Activated B cell treated with CpG ODN at 0.5 μM for 24 hours (primary cell): ENCODE measurements at regions of chr15 and their contacts with region 1.

Region 1: DNA sequence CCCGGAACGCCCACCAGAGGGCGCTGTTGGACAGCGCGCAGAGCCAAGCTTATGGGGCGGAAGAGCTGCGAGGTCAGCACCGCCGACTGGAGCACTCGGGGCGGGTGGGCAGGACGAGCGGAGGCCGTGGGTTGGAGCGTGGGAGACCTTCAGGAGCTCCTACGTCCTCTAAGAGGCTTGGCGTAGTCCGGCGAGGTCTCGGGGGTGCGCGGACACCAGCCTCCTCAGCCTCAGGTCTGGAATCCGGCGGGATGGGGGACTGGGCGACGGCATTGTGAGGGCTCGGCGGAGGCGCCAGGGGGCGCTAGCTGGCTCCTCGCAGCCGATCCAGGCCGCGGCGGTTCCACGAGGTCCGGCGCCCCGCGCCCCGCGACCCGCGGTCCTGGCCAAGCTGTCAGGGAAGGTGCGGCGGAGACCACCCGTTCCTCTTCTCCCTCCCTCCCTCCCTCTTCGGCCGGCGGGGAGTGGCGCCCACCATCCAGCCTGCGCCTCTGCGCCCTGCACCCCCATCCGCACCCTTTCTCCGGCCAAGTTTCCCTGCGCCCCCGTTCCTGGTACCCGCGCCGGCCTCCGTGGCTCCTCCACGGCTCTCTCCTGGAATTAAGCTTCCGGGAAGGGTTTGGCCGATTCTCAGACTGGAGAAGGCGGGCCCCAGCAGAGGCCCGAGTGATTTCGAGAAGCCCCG is 24.3 kb upstream of the POLG start:
- DNase-seq: peak; percentile 82
- ATAC-seq: peak; percentile 95
- H3K4me3 Mint-ChIP-seq: peak overlapping the region; percentile 86
- H3K27ac Mint-ChIP-seq: no peak overlapping the region
- H3K4me1 Mint-ChIP-seq: peaks cover 11% of the 10 kb centered on the region
- H3K27me3 Mint-ChIP-seq: peaks cover 56% of the 10 kb centered on the region
- CTCF ChIP-seq: peak; percentile 73

Region 2: GRCh38 chr15:89293012-89293411 is 65.9 kb before region 1 on chr15:
- CTCF ChIA-PET with region 1: no interaction called
- POLR2A ChIA-PET with region 1: no interaction called
- intact Hi-C with region 1: no loop called
- DNase-seq: no peak
- ATAC-seq: no peak
- H3K4me3 Mint-ChIP-seq: no peak overlapping the region
- H3K27ac Mint-ChIP-seq: no peak overlapping the region
- H3K4me1 Mint-ChIP-seq: no peaks in the 10 kb centered on the region
- H3K27me3 Mint-ChIP-seq: no peaks in the 10 kb centered on the region
- CTCF ChIP-seq: no peak

Region 3: DNA sequence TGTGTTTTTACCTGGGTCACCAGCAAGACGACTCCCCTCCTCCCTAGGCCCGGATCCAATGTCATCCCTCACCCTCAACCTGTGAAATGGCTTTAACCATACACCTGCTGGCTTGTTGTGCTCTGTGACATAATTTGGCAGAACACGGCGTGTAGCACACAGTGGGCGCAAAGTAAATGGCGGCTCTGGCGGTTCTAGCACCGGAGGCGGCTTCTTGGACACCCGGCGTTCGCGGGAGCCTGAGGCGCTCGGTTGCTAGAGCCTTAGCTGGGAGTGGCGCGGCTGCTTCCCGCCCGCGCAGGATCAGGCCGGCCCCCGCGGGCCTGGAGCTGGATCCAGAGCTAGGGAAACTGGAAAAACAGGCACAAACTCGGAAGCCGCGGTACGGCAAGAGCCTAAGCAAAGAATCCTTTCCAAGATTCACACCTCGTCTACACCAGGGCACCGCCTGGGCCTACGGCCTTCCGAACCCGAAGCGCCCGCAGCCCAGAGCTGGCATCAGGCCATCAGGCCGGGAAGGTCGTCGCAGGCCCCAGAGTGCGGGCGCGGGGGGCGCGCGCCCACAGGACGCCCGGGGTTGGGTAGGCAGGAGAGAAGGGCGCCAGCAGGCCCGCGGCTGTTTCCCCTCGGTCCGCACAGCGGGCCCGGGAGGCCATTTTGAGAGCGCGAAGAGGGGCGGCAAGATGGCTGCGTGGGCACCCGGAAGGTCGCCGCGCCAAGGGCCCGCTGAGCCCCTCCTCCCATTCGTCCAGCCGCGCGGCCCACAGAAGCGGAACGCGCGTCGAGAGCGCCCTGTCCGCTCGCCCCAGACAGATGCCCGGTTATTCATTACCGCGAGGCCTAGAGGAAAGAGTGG is 19.6 kb after region 1 on chr15:
- CTCF ChIA-PET with region 1: interaction called, 18 read pairs
- POLR2A ChIA-PET with region 1: no interaction called
- intact Hi-C with region 1: no loop called
- DNase-seq: peak; percentile 37
- ATAC-seq: peak; percentile 74
- H3K4me3 Mint-ChIP-seq: peak overlapping the region; percentile 79
- H3K27ac Mint-ChIP-seq: peak overlapping the region; percentile 46
- H3K4me1 Mint-ChIP-seq: peaks cover 13% of the 10 kb centered on the region
- H3K27me3 Mint-ChIP-seq: peaks cover 60% of the 10 kb centered on the region
- CTCF ChIP-seq: no peak

Region 4: GRCh38 chr15:89430530-89431341 is 71.8 kb after region 1 on chr15:
- CTCF ChIA-PET with region 1: interaction called, 64 read pairs
- POLR2A ChIA-PET with region 1: interaction called, 3 read pairs
- intact Hi-C with region 1: loop called (anchors 1 kb)
- DNase-seq: peak; percentile 94
- ATAC-seq: peak; percentile 99
- H3K4me3 Mint-ChIP-seq: peak overlapping the region; percentile 85
- H3K27ac Mint-ChIP-seq: peak overlapping the region; percentile 38
- H3K4me1 Mint-ChIP-seq: peaks cover 4% of the 10 kb centered on the region
- H3K27me3 Mint-ChIP-seq: peaks cover 10% of the 10 kb centered on the region
- CTCF ChIP-seq: peak; percentile 81

Region 5: DNA sequence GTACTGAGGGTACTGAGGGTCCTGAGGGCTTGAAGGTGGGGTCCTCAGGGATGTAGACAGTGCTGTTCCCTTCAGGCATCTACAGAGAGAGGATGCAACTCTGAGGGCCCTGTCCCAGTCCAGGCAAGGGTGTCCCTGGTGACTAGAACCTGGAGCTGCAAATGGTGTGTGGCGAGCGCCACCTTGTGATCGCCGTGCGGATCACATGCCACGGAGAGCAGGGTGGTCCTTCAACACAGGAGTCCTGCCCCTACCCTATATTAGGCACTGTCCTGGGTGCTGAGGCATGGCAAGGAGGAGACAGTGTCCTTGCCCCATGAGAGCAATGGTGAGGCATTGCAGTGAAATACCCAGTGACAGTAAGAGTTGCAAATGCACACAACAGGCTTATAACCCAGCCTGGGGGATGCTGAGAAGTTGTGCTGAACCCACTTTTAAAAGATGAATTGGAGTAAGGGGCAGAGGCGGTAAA is 113.9 kb after region 1 on chr15:
- CTCF ChIA-PET with region 1: interaction called, 99 read pairs
- POLR2A ChIA-PET with region 1: no interaction called
- intact Hi-C with region 1: loop called (anchors 1 kb)
- DNase-seq: peak; percentile 62
- ATAC-seq: peak; percentile 86
- H3K4me3 Mint-ChIP-seq: no peak overlapping the region
- H3K27ac Mint-ChIP-seq: no peak overlapping the region
- H3K4me1 Mint-ChIP-seq: no peaks in the 10 kb centered on the region
- H3K27me3 Mint-ChIP-seq: peaks cover 30% of the 10 kb centered on the region
- CTCF ChIP-seq: no peak

Region 6: DNA sequence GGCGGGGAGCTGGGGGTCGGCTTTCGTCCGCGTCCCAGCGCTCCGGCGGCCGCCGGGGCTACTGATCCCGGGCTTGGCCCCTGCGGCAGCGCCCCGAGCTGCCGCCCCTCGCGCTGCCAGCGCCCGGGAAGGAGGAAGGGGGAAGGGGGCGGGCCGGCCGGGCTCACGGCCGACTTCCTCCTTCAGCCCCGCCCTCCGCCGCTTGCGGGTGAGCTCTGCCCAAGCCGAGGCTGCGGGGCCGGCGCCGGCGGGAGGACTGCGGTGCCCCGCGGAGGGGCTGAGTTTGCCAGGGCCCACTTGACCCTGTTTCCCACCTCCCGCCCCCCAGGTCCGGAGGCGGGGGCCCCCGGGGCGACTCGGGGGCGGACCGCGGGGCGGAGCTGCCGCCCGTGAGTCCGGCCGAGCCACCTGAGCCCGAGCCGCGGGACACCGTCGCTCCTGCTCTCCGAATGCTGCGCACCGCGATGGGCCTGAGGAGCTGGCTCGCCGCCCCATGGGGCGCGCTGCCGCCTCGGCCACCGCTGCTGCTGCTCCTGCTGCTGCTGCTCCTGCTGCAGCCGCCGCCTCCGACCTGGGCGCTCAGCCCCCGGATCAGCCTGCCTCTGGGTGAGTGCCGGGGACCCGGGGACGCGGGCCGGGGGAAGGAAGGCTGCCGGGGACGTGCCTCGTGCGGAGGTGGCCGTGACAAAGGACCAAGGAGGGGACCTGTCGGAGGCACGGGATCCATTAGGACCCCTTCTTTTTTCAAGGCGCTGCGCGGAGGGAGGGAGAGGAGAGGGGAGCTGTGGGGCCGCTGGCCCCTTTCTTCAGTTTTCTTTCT is 842.4 kb after region 1 on chr15 and contains the start of gene SEMA4B:
- CTCF ChIA-PET with region 1: no interaction called
- POLR2A ChIA-PET with region 1: no interaction called
- intact Hi-C with region 1: no loop called
- DNase-seq: peak; percentile 81
- ATAC-seq: peak; percentile 90
- H3K4me3 Mint-ChIP-seq: peak within 1 kb of the TSS; percentile 93
- H3K27ac Mint-ChIP-seq: peak within 1 kb of the TSS; percentile 93
- H3K4me1 Mint-ChIP-seq: peaks cover 77% of the 10 kb centered on the region
- H3K27me3 Mint-ChIP-seq: no peaks in the 10 kb centered on the region
- CTCF ChIP-seq: no peak
- total RNA-seq, gene SEMA4B: 68.1 and 85.1 TPM in 2 replicates